Activated naive CD8-positive, alpha-beta T cell treated with anti-CD3 and anti-CD28 coated beads, Interleukin-2, amount 10 ng/mL, durations not matched to agents 7 days and 5 days (primary cell): ENCODE measurements at regions of chr14 and their contacts with region 1.

Region 1: DNA sequence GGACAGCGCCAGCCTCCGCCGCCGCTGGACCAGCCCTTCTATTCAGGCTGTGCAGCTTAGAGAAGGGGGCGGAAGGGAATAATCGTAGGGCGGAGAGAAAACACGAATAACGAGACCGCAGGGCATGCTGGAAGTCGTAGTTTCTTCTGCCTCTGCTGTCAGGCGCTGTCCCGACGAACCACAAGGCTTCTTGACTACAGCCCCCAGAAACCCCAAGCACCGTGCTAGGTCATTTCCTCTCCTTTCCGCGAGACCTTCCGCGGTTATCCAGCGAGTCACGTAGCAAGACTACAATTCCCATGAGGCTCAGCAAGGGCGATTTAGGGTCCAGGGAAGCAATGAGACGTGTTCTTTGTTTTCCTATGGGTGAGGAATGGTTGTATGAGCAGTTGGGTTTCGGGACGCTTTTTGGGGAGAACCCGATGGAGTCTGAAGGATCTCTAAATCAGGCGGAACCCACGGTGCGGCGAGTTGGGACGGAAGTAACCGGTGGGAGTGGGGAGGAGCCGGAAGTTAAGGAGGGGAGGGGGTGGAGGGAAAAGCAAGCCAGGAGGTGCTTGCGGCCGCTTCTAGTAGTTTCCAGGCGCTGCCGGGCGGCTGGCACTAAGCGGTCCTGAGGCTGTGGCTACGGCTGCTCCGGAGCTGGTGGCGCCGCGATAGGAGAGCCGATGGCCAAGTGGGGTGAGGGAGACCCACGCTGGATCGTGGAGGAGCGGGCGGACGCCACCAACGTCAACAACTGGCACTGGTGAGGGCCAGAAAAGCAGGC is at the starts of genes AHSA1 and VIPAS39:
- DNase-seq: peak; percentile 84
- ATAC-seq: peak; percentile 92
- H3K4me3 Mint-ChIP-seq: peak within 1 kb of the TSS; percentile 100
- H3K27ac Mint-ChIP-seq: peak within 1 kb of the TSS; percentile 100
- H3K4me1 Mint-ChIP-seq: peaks cover 33% of the 10 kb centered on the region
- H3K27me3 Mint-ChIP-seq: no peaks in the 10 kb centered on the region
- total RNA-seq, gene AHSA1: 154 to 163 TPM
- total RNA-seq, gene VIPAS39: 19.2 to 19.6 TPM

Region 2: DNA sequence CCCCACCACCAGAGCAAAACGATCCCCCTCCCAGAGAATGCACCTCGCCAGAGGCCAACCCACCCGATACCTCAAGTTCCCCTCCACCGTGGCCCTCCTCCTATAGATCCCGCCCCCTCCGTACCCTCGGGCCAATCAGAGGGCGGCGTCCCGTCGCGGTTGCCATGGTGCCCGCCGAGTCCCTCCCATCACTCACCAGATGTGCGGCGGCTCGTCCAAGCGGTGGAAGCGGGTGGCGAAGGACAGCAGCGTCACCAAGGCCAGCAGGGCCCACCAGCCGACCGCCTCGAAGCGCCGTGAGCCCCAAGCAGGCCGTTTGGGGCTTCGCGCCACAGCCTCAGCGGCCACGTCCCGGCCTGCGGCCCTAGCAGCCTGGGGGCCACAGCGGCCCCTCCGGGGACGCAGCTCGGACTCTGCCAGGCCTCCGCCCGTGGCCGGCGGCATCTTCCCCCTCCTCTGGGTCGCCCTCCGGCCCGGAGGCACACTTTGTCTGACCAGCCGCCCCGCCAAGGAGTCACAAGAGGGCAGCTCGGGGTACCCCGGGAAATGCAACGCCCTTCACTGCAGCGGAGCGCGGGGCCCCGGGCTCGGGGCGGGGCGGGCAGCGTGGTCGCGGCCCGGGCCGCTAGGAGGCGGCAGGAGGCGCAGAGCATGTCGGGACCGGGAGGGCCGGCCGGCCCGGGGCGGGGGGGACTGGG is 137.3 kb before region 1 on chr14 and contains the start of gene POMT2:
- POLR2A ChIA-PET with region 1: interaction called, 14 read pairs
- DNase-seq: peak; percentile 93
- ATAC-seq: peak; percentile 37
- H3K4me3 Mint-ChIP-seq: peak within 1 kb of the TSS; percentile 95
- H3K27ac Mint-ChIP-seq: peak within 1 kb of the TSS; percentile 99
- H3K4me1 Mint-ChIP-seq: peaks cover 15% of the 10 kb centered on the region
- H3K27me3 Mint-ChIP-seq: no peaks in the 10 kb centered on the region
- total RNA-seq, gene POMT2: 9.3 to 10.6 TPM

Region 3: DNA sequence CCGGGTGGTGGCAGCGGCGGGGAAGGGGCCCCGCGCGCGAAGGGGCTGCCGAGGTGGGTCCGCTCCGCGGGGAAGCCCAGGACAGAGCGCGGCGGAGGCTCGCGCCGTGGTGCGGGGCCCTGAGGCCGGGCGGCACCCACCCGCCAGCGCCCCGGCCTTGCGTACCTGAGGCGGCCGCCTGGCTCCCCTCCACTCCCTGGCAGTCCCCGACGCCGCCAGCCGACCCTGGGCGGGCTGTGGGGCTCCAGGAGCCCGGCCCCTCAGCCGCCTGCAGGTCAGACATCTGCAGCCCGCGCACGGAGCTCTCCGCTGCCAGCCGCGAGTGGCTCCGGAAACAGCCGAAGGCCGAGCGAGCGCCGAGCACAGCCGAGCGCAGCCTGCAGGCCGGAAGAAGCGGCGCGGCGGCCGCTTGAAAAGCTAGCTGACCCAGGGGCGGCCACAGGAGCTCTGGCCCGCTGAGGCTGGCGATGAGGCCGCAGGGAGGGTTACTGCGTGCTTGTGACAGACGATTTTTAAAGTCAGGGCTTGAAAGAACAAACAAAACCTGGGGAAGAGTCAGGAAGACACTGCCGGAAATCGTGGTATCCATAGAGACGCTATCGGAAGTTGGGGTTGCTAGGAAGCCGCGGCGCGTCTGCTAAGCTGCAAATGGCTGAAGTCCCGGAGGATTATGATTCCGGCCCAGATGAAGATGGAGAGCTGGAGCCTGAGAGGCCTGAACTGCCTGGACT is 80.8 kb before region 1 on chr14 and contains the starts of genes SAMD15 and TMED8:
- POLR2A ChIA-PET with region 1: interaction called, 12 read pairs
- DNase-seq: peak; percentile 89
- ATAC-seq: peak; percentile 97
- H3K4me3 Mint-ChIP-seq: peak within 1 kb of the TSS; percentile 93
- H3K27ac Mint-ChIP-seq: peak within 1 kb of the TSS; percentile 90
- H3K4me1 Mint-ChIP-seq: peaks cover 27% of the 10 kb centered on the region
- H3K27me3 Mint-ChIP-seq: peaks cover 4% of the 10 kb centered on the region
- total RNA-seq, gene SAMD15: not detected
- total RNA-seq, gene TMED8: 14.9 to 15.2 TPM

Region 4: GRCh38 chr14:77470192-77470870 is 12.6 kb after region 1 on chr14:
- POLR2A ChIA-PET with region 1: no interaction called
- DNase-seq: no peak
- ATAC-seq: no peak
- H3K4me3 Mint-ChIP-seq: no peak overlapping the region
- H3K27ac Mint-ChIP-seq: no peak overlapping the region
- H3K4me1 Mint-ChIP-seq: no peaks in the 10 kb centered on the region
- H3K27me3 Mint-ChIP-seq: no peaks in the 10 kb centered on the region

Region 5: GRCh38 chr14:77526266-77526665 is 68.6 kb after region 1 on chr14:
- POLR2A ChIA-PET with region 1: no interaction called
- DNase-seq: no peak
- ATAC-seq: no peak
- H3K4me3 Mint-ChIP-seq: no peak overlapping the region
- H3K27ac Mint-ChIP-seq: no peak overlapping the region
- H3K4me1 Mint-ChIP-seq: peaks cover 15% of the 10 kb centered on the region
- H3K27me3 Mint-ChIP-seq: no peaks in the 10 kb centered on the region